ENCODE measurements at regions of chr3 and their contacts with region 1.

Region 1: DNA sequence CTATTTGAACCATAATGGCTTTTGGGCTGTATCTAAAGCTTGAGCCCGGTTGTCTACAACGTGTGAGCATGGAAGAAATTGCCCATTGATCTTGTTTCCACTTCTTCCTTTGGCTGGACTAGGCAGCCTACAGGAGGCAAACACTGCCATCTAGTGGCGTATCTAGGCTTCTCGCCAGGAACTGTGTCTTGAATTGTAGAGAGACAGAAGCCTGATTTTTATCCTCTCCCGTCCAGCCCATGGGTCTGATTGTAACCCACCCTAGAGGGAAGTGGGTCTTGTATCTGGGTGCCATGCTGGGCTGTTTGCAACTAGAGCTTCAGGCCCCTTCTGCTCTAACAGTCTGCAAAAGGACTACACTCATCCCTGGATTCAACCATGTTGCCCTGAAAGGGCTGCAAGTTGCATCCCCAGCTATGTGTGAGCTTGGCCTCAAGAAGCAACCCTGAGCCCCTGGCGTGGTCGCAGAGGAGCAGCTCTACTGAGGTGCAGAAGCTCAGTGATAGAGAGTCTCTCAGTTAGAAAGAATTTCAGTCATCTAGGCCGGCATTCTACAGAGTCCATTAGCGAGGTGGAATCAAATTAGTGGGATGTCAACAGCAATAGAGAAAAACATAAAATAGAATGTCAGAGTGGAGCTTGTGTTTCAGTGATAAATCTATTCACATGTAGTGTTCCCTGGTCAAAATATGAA is 170.2 kb upstream of the UMPS start:
- DNase-seq: peak; percentile 78
- H3K4me3 ChIP-seq: peak overlapping the region in 1 of 2 experiments; percentile 20; a peak in 1 of 4 replicates
- H3K27ac ChIP-seq: peak overlapping the region; percentile 94 to 97
- H3K4me1 ChIP-seq: peaks cover 27 to 57% of the 10 kb centered on the region in 2 experiments
- H3K27me3 ChIP-seq: no peaks in the 10 kb centered on the region
- CTCF ChIP-seq: peak; percentile 94
- EP300 ChIP-seq: peak in 1 of 2 experiments; percentile 44; a peak in 1 of 4 replicates
- RAD21 ChIP-seq: peak; percentile 90

Region 2: GRCh38 chr3:124281453-124282316 is 278.3 kb before region 1 on chr3:
- CTCF ChIA-PET with region 1: interaction called, 18 read pairs
- POLR2A ChIA-PET with region 1: no interaction called
- DNase-seq: peak; percentile 47
- H3K4me3 ChIP-seq: no peak overlapping the region
- H3K27ac ChIP-seq: peak overlapping the region in 1 of 2 experiments; percentile 100; a peak in 3 of 4 replicates
- H3K4me1 ChIP-seq: peaks cover 5 to 52% of the 10 kb centered on the region in 2 experiments; a peak in 2 of 4 replicates
- H3K27me3 ChIP-seq: no peaks in the 10 kb centered on the region
- CTCF ChIP-seq: peak; percentile 74
- EP300 ChIP-seq: no peak
- RAD21 ChIP-seq: peak; percentile 94

Region 3: GRCh38 chr3:124409789-124410261 is 150.2 kb before region 1 on chr3:
- CTCF ChIA-PET with region 1: no interaction called
- POLR2A ChIA-PET with region 1: no interaction called
- DNase-seq: no peak
- H3K4me3 ChIP-seq: no peak overlapping the region
- H3K27ac ChIP-seq: peak overlapping the region; percentile 6 to 34; a peak in 1 of 4 replicates
- H3K4me1 ChIP-seq: peaks cover 13 to 16% of the 10 kb centered on the region in 2 experiments; a peak in 3 of 4 replicates
- H3K27me3 ChIP-seq: no peaks in the 10 kb centered on the region
- CTCF ChIP-seq: no peak
- EP300 ChIP-seq: no peak
- RAD21 ChIP-seq: no peak

Region 4: DNA sequence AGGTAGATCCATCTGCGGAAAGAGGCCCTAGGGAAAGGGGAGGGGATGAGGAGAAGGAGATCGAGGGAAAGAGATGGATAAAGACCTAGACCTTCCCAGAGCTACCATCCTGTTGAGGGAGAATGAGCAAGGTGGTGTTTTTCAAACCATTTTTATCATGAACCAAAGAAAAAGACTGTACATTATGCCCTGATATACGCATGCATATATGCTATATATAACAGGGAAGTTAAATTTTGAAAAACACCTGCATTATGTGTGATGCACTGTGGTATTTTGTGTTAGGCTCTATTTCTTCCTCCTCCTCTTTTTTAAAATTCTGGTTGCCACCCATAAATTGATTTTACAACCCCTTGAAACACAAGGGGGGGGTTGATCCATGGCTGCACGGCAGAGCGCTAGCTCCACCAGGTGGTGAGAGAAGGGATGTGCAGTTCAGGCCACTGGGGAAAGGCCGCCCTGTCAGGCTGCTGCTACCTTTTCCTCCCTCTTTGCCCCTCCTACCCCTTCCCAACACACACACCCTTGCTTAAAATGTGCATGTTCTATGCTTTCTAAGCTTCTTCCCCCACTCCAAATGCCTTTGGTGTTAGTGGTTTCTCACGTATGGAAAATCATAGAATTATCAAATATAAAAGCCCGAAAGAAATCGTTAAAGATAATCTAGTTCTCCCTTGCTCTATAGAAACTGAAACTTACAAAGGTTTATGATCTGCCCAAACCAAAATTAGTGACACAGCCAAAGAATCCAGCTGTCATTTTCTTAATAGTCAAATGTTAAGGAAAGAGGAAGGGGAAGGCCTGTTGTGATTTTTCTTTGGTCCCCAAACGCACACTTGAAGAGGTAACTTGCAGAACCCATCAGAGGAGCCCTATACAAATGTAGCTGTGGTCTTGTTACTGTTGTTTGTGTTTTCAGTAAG is 91.8 kb before region 1 on chr3:
- CTCF ChIA-PET with region 1: interaction called, 42 read pairs
- POLR2A ChIA-PET with region 1: no interaction called
- DNase-seq: peak; percentile 78
- H3K4me3 ChIP-seq: no peak overlapping the region; a peak in 1 of 4 replicates
- H3K27ac ChIP-seq: peak overlapping the region in 1 of 2 experiments; percentile 47; a peak in 1 of 4 replicates
- H3K4me1 ChIP-seq: peaks cover 0 to 10% of the 10 kb centered on the region in 2 experiments; a peak in 2 of 4 replicates
- H3K27me3 ChIP-seq: no peaks in the 10 kb centered on the region
- CTCF ChIP-seq: peak; percentile 99
- EP300 ChIP-seq: no peak
- RAD21 ChIP-seq: peak; percentile 99

Region 5: DNA sequence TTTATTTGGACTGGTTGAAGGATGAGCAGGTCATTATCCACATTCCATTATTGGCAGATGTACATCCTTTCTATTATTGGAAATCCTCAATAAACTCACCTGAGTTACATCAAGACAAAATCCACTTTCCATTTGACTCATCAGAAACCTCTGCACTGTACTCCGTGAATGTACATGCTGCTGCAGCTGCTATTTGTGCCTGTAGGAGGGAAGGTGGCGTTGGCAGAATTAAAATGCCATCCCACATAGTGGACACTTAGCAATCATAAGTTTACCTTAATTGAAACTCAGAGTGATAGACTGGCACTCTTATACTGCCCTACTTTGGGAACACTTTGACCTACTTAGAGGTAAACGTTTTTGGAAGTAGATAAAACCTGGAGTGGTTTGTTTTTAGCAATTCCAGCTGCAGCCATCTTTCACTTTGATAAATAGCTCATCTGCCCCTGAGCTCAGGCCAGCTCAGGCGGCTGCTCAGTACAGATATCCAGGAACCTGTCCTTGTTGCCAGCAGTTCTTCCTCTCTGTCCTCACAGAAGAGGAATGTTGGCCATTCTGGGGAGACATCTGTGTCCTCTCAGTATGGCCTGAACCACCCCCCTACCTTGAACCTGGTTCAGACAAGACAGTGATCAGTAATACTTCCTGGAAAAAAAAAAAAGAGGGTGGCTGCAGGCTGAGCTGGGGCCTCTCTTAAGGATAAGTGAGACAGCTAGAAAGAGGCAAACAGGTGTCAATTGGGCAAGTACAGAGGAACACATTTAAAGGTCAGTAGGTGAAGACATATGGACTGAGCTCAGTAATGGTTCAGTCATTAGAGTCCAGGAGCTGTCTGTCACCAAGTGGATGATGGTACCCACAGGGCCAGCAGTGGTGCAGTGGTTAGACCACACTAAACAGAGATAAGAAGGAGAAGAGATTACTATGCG is 16.8 kb after region 1 on chr3:
- CTCF ChIA-PET with region 1: interaction called, 85 read pairs
- POLR2A ChIA-PET with region 1: no interaction called
- DNase-seq: no peak
- H3K4me3 ChIP-seq: no peak overlapping the region
- H3K27ac ChIP-seq: no peak overlapping the region
- H3K4me1 ChIP-seq: 0 out of 4 replicates have a peak, but pooled peaks cover 0 to 4% of the 10 kb centered on the region in 2 experiments
- H3K27me3 ChIP-seq: no peaks in the 10 kb centered on the region
- CTCF ChIP-seq: no peak
- EP300 ChIP-seq: no peak
- RAD21 ChIP-seq: no peak

Region 6: GRCh38 chr3:124688581-124689454 is 128.8 kb after region 1 on chr3:
- CTCF ChIA-PET with region 1: interaction called, 280 read pairs
- POLR2A ChIA-PET with region 1: no interaction called
- DNase-seq: peak; percentile 78
- H3K4me3 ChIP-seq: no peak overlapping the region; a peak in 1 of 4 replicates
- H3K27ac ChIP-seq: no peak overlapping the region
- H3K4me1 ChIP-seq: peaks cover 0 to 7% of the 10 kb centered on the region in 2 experiments; a peak in 1 of 4 replicates
- H3K27me3 ChIP-seq: no peaks in the 10 kb centered on the region
- CTCF ChIP-seq: peak; percentile 86
- EP300 ChIP-seq: no peak
- RAD21 ChIP-seq: peak; percentile 78

Region 7: DNA sequence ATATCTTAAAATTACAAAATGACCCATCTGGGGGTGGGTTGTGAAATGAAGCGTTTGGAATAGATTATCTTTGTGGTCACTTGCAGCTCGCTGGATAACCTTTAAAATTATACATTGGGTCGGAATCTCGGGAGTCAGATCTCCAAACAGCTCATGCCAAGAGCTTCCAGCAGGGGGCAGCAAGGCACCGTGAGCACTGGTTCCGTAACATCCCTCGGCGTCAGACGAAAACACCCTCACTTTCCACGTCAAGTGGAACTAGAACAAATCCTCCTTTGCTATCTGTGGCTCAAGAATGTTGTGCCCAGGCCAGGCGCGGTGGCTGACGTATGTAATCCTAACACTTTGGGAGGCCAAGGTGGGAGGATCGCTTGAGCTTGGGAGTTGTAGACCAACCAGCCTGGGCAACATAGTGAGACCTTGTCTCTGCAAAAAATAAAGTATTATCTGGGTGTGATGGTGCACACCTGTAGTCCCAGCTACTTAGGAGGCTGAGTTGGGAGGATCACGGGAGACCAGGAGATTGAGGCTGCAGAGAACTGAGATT is 201.3 kb after region 1 on chr3:
- CTCF ChIA-PET with region 1: interaction called, 14 read pairs
- POLR2A ChIA-PET with region 1: no interaction called
- DNase-seq: peak; percentile 77
- H3K4me3 ChIP-seq: no peak overlapping the region
- H3K27ac ChIP-seq: peak overlapping the region; percentile 4 to 74; a peak in 2 of 4 replicates
- H3K4me1 ChIP-seq: peaks cover 9 to 47% of the 10 kb centered on the region in 2 experiments; a peak in 3 of 4 replicates
- H3K27me3 ChIP-seq: no peaks in the 10 kb centered on the region
- CTCF ChIP-seq: peak; percentile 98
- EP300 ChIP-seq: no peak
- RAD21 ChIP-seq: peak; percentile 96

Measured in SK-N-SH (cell line).